ENCODE measurements at regions of chr3 and their contacts with region 1.

Region 1: GRCh38 chr3:108090701-108091451 is at the start of gene CD47:
- DNase-seq: peak; percentile 99
- ATAC-seq: peak; percentile 96
- total RNA-seq, gene CD47: 44.2 TPM

Region 2: GRCh38 chr3:107938143-107938542 is 152.7 kb before region 1 on chr3:
- intact Hi-C with region 1: loop called (anchors 5 kb)
- DNase-seq: no peak
- ATAC-seq: peak; percentile 59

Region 3: DNA sequence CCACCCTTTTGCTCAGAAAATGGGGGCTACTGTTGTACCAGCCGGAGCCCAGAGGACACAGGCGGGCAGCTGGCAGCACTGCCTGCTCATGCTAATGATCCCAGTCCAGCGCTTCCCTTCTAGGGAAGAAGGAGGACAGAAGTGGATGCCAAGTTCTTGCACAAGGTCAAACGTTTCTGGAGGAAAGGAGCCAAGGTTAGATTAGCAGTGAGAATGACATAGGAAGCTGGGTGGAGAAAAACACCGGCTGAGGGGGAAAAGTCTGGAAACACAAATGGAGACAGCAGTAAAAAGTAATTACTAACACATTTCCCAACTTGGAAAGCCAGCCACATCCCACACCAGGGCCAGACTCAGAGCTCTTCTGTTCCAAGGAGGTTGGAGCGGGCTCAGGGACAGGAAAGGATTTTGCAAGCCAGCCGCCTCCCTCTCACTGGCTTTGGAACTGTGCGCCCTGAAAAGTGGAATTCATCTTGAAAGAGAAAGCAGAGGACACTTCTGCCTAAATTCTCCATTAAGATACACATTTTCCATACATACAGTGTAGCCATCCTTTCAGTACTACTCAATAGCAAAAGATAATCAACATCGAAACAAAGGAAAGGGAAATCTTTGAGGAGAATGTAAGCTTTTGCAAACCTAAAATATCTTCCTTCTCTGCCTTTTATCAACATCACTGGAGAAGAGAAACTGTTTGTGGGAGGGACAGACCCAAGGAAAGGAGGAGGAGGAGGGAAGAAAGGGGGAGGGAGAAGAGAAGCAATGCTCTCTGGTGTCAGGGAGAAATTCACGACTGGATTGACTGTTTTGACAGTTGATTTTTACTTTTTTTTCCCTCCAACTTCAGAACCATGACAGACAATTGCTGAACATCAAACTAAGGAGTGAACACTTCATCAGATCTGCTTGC is 133.6 kb before region 1 on chr3:
- intact Hi-C with region 1: loop called (anchors 1 kb)
- DNase-seq: peak; percentile 82
- ATAC-seq: peak; percentile 94

Region 4: GRCh38 chr3:107987036-107987947 is 103.6 kb before region 1 on chr3:
- intact Hi-C with region 1: loop called (anchors 10 kb)
- DNase-seq: no peak
- ATAC-seq: peak; percentile 86

Region 5: GRCh38 chr3:108022256-108023097 is 68.4 kb before region 1 on chr3:
- intact Hi-C with region 1: loop called (anchors 5 kb)
- DNase-seq: no peak
- ATAC-seq: peak; percentile 66

Region 6: DNA sequence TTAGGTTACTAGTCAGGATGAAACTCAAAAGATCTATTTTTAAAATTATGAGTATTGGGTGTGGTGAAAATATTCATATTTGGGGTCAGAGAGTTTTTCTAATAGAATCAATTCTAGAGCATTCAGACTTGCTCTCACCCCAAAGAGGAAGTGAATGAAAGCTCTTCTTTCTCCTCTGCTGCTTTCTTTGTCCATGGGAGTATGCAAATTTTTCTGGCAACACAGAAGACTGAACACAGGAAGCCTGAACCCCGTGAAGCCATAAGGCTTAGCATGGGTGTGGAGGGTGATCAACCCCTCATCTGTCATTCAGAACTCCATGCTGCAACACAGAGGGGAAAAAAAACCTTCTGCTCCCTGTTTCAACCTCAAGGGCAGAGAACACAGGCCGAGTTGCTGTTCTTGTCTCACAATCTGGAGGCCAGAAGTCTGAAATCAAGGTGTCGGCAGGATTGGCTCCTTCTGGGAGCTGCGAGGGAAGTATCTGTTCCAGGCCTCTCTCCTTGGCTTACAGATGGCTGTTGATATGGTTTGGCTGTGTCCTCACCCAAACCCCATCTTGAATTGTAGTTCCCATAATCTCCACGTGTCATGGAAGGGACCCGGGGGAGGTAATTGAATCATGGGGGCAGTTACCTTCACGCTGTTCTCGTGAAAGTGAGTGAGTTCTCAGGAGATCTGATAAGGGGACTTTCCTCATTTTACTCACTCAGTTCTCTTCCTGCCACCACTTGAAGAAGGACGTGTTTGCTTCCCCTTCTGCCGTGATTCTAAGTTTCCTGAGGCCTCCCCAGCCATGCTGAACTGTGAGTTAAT is 33.7 kb after region 1 on chr3:
- intact Hi-C with region 1: no loop called
- DNase-seq: no peak
- ATAC-seq: no peak

Region 7: GRCh38 chr3:108221911-108222852 is 131.3 kb after region 1 on chr3 and contains the start of gene IFT57:
- intact Hi-C with region 1: loop called (anchors 2 kb)
- DNase-seq: peak; percentile 95
- ATAC-seq: peak; percentile 100
- total RNA-seq, gene IFT57: 27.6 TPM

Measured in Right ventricle myocardium inferior (tissue), 1 donor.